ENCODE measurements at regions of chr11 and their contacts with region 1.

Region 1: DNA sequence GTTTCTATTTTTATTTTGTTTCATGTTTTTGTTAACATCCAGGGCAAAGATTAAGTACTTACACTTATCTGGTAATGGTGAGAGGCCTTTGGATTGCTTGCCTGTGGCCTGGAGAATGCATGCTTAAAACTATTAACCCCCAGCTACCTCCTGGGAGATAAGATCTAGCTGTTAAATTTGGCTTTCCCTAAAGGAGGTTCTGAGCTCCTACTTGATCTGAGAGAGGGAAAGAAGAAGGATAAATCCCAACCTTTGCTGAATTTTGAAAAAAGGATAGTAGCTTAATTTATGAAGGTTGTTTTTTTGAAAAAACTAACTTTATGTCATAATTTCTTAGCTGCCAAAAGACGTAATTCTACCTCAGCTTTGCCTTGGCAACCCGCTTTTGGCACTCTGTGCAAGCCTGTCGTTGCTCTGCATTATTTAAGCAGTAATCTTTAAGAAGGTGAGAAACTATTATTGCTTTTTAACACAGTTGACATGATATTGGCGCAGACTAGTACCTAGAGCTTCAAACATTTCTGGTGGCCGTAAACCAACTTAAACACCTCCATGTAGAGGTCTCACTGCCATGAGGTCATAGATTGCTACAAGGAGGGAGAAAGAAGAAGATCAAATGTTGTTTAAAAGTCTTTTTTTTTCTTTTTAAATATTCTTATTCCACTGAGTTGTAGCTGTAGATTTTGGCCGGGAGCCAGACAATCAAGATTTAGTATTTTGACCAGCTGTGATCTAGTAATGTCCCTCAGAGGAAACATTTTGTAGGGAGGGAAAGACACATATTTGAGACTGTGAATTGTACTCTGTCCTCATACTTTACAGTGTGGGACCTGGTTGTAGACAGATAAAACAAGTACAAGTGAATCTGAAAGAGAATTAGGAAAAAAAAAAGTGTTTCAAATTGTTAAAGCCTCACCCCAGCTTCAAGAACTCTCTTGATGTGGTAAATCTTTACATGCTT is 74.4 kb downstream of the WNT11 start:
- DNase-seq: no peak
- CTCF ChIP-seq: no peak

Region 2: DNA sequence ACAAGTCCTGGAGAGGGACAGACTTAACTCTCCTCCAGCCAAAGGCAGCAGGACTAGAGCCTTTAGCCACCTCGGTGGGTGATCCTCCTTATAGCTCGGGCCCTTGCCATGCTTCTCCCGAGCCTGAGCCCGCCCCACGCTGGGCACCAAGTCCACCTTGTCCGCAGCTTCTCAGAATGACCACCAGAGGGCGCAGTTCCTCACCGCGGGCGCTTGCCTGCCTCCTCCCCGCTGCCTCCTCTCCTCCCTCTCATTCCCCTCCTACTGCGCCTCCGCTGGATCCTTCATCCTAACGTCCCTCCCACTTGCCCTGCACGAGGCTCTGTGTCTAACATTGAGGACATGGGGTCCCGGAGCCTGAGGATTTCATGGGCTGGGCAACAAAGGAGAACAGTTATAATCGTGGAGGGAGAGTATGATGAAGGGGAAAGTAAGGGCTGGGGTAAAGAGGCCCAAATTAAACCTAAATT is 425.7 kb before region 1 on chr11:
- in situ Hi-C with region 1: loop called (anchors 25 kb)
- DNase-seq: peak; percentile 84
- CTCF ChIP-seq: peak; percentile 95

Measured in GM13976 (cell line).